Caco-2 (cell line): ENCODE measurements at regions of chr16 and their contacts with region 1.

Region 1: GRCh38 chr16:29790183-29790952 is at the start of gene KIF22:
- DNase-seq: peak; percentile 98 to 99
- H3K4me3 ChIP-seq: peak within 1 kb of the TSS; percentile 98
- H3K4me3 Mint-ChIP-seq: peak within 1 kb of the TSS; percentile 79
- H3K27ac Mint-ChIP-seq: peak within 1 kb of the TSS; percentile 92
- H3K4me1 ChIP-seq: 0 out of 2 replicates have a peak, but pooled peaks cover 5% of the 10 kb centered on the region
- H3K4me1 Mint-ChIP-seq: peaks cover 22% of the 10 kb centered on the region
- H3K27me3 ChIP-seq: no peaks in the 10 kb centered on the region
- H3K27me3 Mint-ChIP-seq: no peaks in the 10 kb centered on the region
- CTCF ChIP-seq: peak; percentile 52 to 83
- total RNA-seq, gene KIF22: 134 and 152 TPM in 2 replicates

Region 2: GRCh38 chr16:29710227-29711219 is 79.8 kb before region 1 on chr16:
- CTCF ChIA-PET with region 1: no interaction called
- POLR2A ChIA-PET with region 1: no interaction called
- intact Hi-C with region 1: no loop called
- DNase-seq: peak in 1 of 2 experiments; percentile 56
- H3K4me3 ChIP-seq: no peak overlapping the region
- H3K4me3 Mint-ChIP-seq: no peak overlapping the region
- H3K27ac Mint-ChIP-seq: peak overlapping the region; percentile 36
- H3K4me1 ChIP-seq: no peaks in the 10 kb centered on the region; the same call in 1 of the 2 replicates
- H3K4me1 Mint-ChIP-seq: peaks cover 14% of the 10 kb centered on the region
- H3K27me3 ChIP-seq: no peaks in the 10 kb centered on the region
- H3K27me3 Mint-ChIP-seq: no peaks in the 10 kb centered on the region
- CTCF ChIP-seq: peak; percentile 54 to 64

Region 3: GRCh38 chr16:29729116-29729521 is 61.2 kb before region 1 on chr16:
- CTCF ChIA-PET with region 1: interaction called, 8 read pairs
- POLR2A ChIA-PET with region 1: no interaction called
- intact Hi-C with region 1: loop called (anchors 1 kb)
- DNase-seq: peak; percentile 43 to 49
- H3K4me3 ChIP-seq: no peak overlapping the region
- H3K4me3 Mint-ChIP-seq: peak overlapping the region; percentile 52
- H3K27ac Mint-ChIP-seq: no peak overlapping the region
- H3K4me1 ChIP-seq: peaks cover 4% of the 10 kb centered on the region; the same call in 1 of the 2 replicates
- H3K4me1 Mint-ChIP-seq: peaks cover 8% of the 10 kb centered on the region
- H3K27me3 ChIP-seq: no peaks in the 10 kb centered on the region
- H3K27me3 Mint-ChIP-seq: no peaks in the 10 kb centered on the region
- CTCF ChIP-seq: peak; percentile 66 to 72

Region 4: DNA sequence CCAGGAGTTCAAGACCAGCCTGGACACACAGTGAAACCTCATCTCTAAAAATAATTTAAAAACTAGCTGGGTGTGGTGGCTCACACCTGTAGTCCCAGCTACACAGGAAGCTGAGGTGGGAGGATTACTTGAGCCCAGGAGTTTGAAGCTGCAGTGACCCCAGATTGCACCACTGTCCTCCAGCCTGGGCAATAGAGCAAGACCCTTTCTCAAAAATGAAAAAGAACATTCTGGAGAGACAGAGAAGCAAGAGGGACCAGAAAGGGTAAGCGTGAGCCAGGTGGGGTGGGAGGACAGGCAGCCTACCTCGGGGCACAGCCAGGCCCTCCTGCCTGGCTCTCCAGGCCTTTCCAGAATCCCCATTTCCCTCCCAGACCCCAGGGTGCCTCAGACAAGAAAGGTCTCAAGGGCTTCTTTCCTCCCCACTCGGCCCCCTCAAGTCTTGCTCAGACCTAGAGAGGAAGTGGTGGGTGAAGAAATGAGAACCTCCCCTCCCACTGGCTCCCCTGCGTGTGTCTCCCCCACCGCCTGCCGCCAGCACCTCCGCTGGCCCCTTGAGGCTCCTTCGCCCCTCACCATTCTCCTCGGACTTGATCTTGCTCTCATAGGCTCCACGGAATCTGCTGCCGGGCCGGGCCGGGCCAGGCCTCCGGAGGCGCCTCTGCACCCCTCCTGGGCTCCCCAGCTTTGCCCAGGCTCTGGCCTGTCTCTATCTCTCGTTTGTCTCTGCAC is 45.1 kb before region 1 on chr16:
- CTCF ChIA-PET with region 1: no interaction called
- POLR2A ChIA-PET with region 1: no interaction called
- intact Hi-C with region 1: loop called (anchors 1 kb)
- DNase-seq: no peak
- H3K4me3 ChIP-seq: no peak overlapping the region
- H3K4me3 Mint-ChIP-seq: no peak overlapping the region
- H3K27ac Mint-ChIP-seq: no peak overlapping the region
- H3K4me1 ChIP-seq: peaks cover 16% of the 10 kb centered on the region
- H3K4me1 Mint-ChIP-seq: peaks cover 6% of the 10 kb centered on the region
- H3K27me3 ChIP-seq: no peaks in the 10 kb centered on the region
- H3K27me3 Mint-ChIP-seq: no peaks in the 10 kb centered on the region
- CTCF ChIP-seq: no peak

Region 5: DNA sequence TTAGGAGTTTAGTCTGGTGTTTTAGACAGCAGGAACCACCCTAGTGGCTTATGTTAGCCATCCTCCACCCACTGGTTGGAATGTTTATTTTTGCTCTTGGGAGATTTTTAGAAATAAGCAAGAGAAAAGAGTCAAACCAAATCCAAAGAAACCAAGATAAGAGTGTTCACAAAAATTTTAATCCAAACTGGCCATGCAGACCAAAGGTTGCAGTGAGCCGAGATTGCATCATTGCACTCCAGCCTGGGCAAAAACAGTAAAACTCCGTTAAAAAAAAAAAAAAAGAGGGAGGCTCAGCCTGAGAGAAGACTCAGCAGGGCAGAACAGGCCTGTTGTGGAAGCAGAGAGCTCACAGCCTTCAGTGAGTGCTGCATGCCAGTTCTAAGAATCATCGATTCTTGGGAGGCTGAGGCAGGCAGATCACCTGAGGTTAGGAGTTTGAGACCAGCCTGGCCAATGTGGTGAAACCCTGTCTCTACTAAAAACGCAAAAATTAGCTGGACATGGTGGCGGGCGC is 32.4 kb before region 1 on chr16:
- CTCF ChIA-PET with region 1: interaction called, 5 read pairs
- POLR2A ChIA-PET with region 1: interaction called, 8 read pairs
- intact Hi-C with region 1: loop called (anchors 1 kb)
- DNase-seq: peak; percentile 81
- H3K4me3 ChIP-seq: no peak overlapping the region
- H3K4me3 Mint-ChIP-seq: peak overlapping the region; percentile 22
- H3K27ac Mint-ChIP-seq: peak overlapping the region; percentile 78
- H3K4me1 ChIP-seq: peaks cover 36% of the 10 kb centered on the region
- H3K4me1 Mint-ChIP-seq: peaks cover 23% of the 10 kb centered on the region
- H3K27me3 ChIP-seq: no peaks in the 10 kb centered on the region
- H3K27me3 Mint-ChIP-seq: no peaks in the 10 kb centered on the region
- CTCF ChIP-seq: peak in 1 of 2 experiments; percentile 33

Region 6: DNA sequence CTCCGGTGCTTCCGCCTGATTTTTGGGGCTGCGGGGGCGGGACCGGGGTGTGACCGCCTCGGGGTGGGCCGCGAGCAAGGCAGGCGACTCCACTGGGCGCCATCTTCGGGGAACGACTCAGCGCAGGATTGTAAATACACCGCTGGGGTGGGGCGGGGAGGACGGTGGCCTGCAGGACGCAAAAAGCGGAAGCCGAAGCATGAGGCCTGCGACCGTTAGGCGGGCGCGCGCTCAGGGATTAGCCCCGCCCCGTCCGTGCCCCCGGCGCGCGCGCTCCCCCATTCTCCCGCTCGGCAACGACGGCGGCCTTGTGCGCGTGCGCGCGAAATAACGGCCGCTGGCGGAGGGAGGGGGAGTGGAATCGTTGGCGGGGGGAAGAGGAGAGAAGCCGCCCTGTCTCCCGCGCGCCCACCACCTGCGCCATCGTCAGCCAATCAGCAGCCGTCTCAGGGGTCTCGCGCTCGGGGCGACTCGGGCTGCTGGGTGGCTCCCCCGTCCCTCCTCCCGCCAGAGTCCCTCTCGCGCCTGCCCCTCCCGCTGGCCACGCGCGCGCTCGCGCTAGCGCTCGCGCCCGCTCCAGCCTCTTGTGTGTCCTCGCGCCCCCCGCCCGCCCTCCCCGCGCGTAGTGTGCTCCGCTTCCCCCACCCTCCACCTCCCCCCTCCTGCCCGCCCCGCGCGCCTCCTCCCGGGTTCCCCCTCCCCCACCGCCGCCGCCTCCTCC is 15.2 kb after region 1 on chr16:
- CTCF ChIA-PET with region 1: no interaction called
- POLR2A ChIA-PET with region 1: interaction called, 6 read pairs
- intact Hi-C with region 1: loop called (anchors 2 kb)
- DNase-seq: peak; percentile 96 to 97
- H3K4me3 ChIP-seq: peak overlapping the region; percentile 59
- H3K4me3 Mint-ChIP-seq: peak overlapping the region; percentile 79
- H3K27ac Mint-ChIP-seq: peak overlapping the region; percentile 92
- H3K4me1 ChIP-seq: peaks cover 20% of the 10 kb centered on the region; the same call in 1 of the 2 replicates
- H3K4me1 Mint-ChIP-seq: peaks cover 26% of the 10 kb centered on the region
- H3K27me3 ChIP-seq: no peaks in the 10 kb centered on the region
- H3K27me3 Mint-ChIP-seq: no peaks in the 10 kb centered on the region
- CTCF ChIP-seq: no peak

Region 7: DNA sequence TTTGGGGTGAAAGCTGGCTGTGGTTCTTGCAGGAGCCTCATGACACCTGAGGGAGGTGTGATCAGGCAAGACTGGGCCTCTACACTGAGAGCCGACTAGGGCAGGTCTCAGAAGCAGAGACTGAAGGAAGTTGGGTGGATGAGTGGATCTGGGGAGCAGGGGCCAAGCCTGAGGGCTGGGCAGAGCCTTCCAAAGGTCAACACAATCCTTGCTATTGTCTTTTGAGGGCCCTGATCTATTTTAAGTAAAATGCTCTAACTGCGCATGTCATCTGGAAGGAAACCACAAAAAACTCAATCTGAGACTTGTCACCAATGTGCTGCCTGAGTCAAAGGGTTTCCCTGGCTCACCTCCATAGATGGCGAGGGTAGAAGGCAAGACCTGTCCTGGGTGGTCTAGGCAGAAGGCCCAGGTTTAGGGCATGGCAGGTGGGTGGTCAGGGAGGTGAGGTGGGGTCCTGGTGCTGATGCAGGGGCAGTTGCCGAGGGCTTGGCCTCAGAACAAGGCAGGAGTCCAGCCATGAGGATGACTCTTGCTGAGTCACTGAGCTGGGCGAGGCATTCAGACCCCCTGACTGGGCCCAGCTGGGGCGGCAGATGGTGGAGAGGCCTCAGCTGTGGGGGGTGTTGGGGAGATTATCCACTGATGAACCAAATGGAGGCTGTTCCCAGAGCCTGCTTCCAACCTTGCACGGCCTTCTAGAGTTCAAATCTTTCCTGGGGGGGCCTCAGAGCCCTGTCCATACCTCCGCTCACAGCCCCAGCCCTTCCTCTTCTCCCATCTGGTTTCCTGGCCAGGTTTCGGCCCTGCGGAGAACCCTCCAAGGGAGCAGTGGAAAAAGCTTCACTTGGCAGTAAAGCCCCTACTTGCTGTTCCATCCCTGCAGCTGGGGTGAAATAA is 35.0 kb after region 1 on chr16:
- CTCF ChIA-PET with region 1: no interaction called
- POLR2A ChIA-PET with region 1: interaction called, 3 read pairs
- intact Hi-C with region 1: loop called (anchors 1 kb)
- DNase-seq: no peak
- H3K4me3 ChIP-seq: no peak overlapping the region
- H3K4me3 Mint-ChIP-seq: no peak overlapping the region
- H3K27ac Mint-ChIP-seq: peak overlapping the region; percentile 53
- H3K4me1 ChIP-seq: peaks cover 53% of the 10 kb centered on the region
- H3K4me1 Mint-ChIP-seq: peaks cover 21% of the 10 kb centered on the region
- H3K27me3 ChIP-seq: no peaks in the 10 kb centered on the region
- H3K27me3 Mint-ChIP-seq: no peaks in the 10 kb centered on the region
- CTCF ChIP-seq: no peak